Panc1 (cell line): ENCODE measurements at regions of chr22 and their contacts with region 1.

Region 1: DNA sequence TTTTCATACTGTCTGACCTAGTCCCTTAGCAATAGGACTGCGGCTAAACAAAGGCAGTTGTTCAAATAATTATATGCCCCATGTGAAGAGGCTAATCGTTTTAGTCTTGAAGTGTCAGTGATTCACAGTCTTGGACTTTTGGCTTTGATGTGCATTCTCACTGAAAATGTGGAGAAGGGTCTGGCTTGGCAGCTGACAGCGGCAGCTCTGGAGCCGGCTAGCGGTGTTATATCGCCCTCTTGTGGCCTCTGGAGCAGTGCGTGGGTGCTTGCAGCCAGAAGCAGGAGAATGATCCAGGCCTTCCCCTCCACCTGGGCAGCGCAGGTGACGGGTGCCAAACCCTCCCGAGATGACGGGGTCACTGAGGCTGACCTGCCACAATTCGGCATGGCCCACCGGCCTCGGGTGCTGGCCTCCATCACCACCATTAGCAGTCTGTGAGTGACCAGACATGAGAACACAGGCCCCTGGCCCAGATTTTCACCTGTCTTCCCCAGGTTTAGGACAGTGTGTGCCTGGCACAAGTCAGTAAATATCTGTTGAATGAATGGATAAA is 90.3 kb upstream of the PITPNB start:
- DNase-seq: peak; percentile 39
- ATAC-seq: peak; percentile 97
- H3K4me3 ChIP-seq: no peak overlapping the region
- H3K27ac ChIP-seq: no peak overlapping the region
- H3K4me1 ChIP-seq: no peaks in the 10 kb centered on the region; the same call in 1 of the 2 replicates
- H3K27me3 ChIP-seq: no peaks in the 10 kb centered on the region
- CTCF ChIP-seq: peak; percentile 93

Region 2: DNA sequence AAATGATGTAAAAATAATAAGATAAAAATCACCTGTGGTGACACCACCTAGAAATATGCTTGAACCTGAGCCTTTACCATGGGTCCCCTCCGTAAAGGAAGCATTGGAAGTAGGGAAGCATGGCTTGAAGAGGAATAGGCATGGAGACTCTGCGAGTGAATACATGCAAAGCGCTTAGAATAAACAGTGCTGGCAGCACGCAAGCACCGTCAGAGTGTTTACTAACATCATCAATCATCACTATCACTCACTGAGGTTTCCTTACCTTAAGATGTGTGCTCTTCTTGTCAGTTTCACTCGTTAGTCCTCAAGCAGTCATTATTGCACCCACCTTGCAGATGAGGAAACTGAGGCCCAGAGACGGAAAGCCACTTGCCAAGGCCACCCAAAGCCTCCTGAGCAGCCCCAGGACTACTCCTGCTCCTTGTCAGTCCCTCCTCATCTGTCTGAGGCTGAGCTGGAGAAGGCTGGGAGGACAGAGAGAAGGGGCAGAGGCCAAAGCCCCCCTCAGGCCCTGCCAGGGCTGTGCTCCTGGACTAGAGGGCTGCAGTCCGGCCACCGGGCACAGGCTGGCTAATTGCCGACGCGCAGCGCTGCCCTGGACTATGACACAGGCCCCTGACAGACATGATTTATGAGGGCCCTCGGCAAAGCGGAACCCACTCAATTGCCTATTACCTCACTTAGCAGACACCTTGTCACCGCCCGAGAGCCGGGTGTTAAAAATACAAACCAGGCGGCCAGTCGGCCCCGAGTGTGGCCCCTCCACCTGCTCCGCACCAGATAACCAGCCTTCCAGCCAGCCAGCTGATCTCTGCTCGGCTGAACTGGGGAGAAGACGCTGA is 376.7 kb before region 1 on chr22:
- CTCF ChIA-PET with region 1: no interaction called
- POLR2A ChIA-PET with region 1: no interaction called
- in situ Hi-C with region 1: no loop called
- intact Hi-C with region 1: no loop called
- DNase-seq: no peak
- ATAC-seq: no peak
- H3K4me3 ChIP-seq: no peak overlapping the region
- H3K27ac ChIP-seq: no peak overlapping the region
- H3K4me1 ChIP-seq: no peaks in the 10 kb centered on the region
- H3K27me3 ChIP-seq: no peaks in the 10 kb centered on the region
- CTCF ChIP-seq: no peak

Region 3: DNA sequence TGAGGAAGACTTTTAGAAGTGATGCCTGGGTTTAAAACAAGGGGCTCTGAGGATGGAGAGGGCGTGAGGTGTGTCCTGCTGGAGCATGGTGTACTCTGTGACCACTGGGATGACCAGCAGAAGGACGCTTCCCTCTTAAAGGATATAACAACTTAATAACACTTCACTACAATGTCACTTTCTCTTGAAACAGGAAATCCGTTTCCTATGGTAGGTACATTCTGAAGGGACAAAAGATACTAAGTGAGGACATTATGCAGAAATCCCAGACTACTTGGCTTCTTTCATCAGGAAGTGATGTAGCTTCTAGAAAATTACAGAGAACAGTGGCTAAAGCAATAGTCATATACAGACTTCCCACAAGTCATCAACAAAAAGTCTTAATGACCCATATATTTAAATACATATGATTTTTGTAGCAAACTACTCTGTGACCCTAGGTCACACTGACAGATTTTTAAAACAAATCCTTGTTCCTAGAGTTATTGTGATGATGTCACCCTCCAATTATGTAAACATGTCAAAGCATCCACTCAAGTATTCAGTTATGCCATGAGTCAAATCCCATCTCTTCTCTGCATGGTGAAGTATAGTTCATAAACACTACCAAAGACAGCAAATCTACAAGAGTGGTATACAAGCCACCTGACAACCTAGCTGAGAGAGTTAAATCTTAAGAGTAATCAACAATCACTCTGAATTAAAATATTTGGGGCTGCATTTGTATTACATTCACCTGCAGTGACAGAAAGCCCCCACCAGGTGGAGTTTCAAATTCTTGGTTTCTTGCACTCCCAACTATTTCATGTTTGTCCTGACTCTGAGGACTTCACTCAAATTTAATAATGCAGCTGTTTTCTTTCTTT is 123.1 kb before region 1 on chr22:
- CTCF ChIA-PET with region 1: no interaction called
- POLR2A ChIA-PET with region 1: no interaction called
- in situ Hi-C with region 1: no loop called
- intact Hi-C with region 1: loop called (anchors 5 kb)
- DNase-seq: peak; percentile 39
- ATAC-seq: peak; percentile 62
- H3K4me3 ChIP-seq: no peak overlapping the region
- H3K27ac ChIP-seq: no peak overlapping the region
- H3K4me1 ChIP-seq: peaks cover 7% of the 10 kb centered on the region; the same call in 1 of the 2 replicates
- H3K27me3 ChIP-seq: no peaks in the 10 kb centered on the region
- CTCF ChIP-seq: peak; percentile 73; the same call in 1 of the 2 replicates

Region 4: DNA sequence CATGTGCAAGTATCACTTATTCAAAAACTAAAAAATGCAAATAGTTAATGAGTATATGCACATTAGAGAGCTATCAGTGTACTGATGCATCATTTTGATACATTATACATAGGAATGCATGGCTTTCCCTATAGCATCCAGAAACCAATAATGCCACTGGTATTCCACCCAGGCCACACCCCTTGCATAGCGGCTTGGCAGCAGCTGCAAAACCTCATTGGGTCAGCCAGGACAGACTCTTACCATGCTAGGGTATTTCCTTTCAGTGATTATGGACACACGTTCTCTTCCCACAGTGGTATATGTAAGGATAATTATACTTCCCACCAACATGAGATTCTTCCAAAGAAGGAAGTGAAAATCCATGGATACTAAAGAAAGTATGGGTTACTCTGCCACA is 55.6 kb after region 1 on chr22:
- CTCF ChIA-PET with region 1: no interaction called
- POLR2A ChIA-PET with region 1: no interaction called
- in situ Hi-C with region 1: no loop called
- intact Hi-C with region 1: no loop called
- DNase-seq: no peak
- ATAC-seq: no peak
- H3K4me3 ChIP-seq: no peak overlapping the region
- H3K27ac ChIP-seq: no peak overlapping the region
- H3K4me1 ChIP-seq: no peaks in the 10 kb centered on the region
- H3K27me3 ChIP-seq: no peaks in the 10 kb centered on the region
- CTCF ChIP-seq: no peak

Region 5: DNA sequence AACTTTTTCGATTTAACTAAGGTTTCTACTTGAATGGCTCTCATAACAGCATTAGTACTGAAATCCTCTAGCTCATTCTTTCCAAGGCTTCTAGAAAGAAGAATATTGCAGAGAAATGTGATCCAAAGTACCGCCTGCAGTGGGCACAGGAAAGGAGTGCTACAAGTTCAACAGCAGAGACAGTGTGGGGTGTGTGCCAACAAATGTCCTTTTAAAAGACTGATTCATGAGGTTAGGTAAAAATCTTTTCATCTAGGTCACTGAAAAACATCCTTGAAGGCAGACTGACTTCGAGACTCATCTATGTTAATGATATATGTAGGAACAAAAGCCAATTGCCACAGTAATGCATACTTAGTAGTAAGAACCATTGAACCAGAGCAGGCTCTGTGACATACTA is 258.8 kb after region 1 on chr22:
- CTCF ChIA-PET with region 1: no interaction called
- POLR2A ChIA-PET with region 1: no interaction called
- in situ Hi-C with region 1: no loop called
- intact Hi-C with region 1: no loop called
- DNase-seq: no peak
- ATAC-seq: no peak
- H3K4me3 ChIP-seq: no peak overlapping the region
- H3K27ac ChIP-seq: no peak overlapping the region
- H3K4me1 ChIP-seq: no peaks in the 10 kb centered on the region
- H3K27me3 ChIP-seq: no peaks in the 10 kb centered on the region
- CTCF ChIP-seq: no peak